Activated CD4-positive, alpha-beta memory T cell treated with anti-CD3 and anti-CD28 coated beads, Interleukin-2, amount 10 ng/mL, durations not matched to agents 7 days and 5 days (primary cell): ENCODE measurements at regions of chr2 and their contacts with region 1.

Region 1: GRCh38 chr2:48107326-48107925 is 201.1 kb upstream of the FBXO11 start:
- DNase-seq: no peak
- H3K4me3 Mint-ChIP-seq: no peak overlapping the region
- H3K27ac Mint-ChIP-seq: no peak overlapping the region
- H3K4me1 Mint-ChIP-seq: peaks cover 31% of the 10 kb centered on the region
- H3K27me3 Mint-ChIP-seq: peaks cover 5% of the 10 kb centered on the region

Region 2: DNA sequence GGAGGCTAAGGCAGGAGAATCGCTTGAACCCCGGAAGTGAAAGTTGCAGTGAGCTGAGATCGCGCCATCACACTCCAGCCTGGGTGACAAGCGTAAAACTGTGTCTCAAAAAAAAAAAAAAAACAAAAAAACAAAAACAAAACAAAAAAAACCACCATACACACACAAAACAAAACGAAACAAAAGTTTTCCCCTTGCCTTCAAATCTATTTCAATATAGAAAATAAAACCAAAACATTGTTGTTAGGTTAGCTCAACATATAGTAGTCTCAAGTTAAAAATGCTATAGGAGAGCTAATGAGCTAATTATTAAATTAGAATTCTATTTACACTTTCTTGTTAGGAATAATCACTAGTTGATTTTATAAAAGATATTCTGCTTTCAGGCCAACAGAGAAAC is 244.5 kb before region 1 on chr2:
- CTCF ChIA-PET with region 1: interaction called, 41 read pairs
- POLR2A ChIA-PET with region 1: interaction called, 3 read pairs
- DNase-seq: no peak
- H3K4me3 Mint-ChIP-seq: no peak overlapping the region
- H3K27ac Mint-ChIP-seq: no peak overlapping the region
- H3K4me1 Mint-ChIP-seq: peaks cover 25% of the 10 kb centered on the region
- H3K27me3 Mint-ChIP-seq: no peaks in the 10 kb centered on the region